WTC11 (cell line): ENCODE measurements at regions of chr6 and their contacts with region 1.

Region 1: DNA sequence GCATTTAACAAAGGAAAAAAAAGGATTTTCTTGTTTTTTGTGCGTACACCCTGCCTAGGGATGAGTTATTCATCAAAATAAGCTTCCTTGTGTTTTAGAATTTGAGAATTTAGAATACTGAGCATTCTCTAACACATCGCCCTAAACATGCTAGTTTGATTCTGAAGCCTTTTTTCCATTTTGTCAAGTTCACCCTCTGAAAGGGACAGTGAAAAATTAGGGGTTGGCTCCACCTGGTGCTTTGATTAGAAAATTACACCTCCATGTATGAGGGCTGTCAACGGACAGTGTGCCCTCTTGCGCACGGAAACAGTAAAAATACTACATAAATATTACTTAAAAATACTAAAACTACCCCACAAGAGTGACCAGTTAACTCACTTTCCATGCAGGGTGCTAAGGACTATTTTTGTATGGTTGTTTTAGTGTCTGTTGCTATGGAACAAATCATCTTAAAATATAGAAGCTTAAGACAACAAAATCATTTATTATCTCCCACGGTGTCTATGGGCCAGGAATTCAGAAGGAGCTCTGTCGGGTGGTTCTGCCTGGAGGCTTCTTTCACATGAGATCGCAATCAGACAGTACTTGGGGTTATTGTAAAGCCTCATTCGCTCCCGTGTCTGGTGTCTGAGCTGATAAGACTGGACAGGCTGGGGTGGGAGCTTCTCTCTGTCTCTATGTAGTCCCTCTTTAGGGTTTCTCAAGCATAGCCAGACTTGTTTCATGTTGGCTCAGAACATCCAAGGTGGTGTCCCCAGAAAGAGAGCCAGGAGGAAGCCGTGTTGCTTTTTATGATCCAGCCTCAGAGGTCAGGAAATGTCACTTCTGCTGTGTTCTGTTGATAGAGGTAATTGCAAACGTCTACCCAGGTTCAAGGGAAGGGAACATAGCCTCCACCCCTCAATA is 41.1 kb upstream of the TMEM170B start:
- DNase-seq: peak; percentile 58
- ATAC-seq: peak; percentile 90
- H3K4me3 Mint-ChIP-seq: no peak overlapping the region
- H3K27ac Mint-ChIP-seq: no peak overlapping the region; the same call in 1 of the 2 replicates
- H3K4me1 Mint-ChIP-seq: peaks cover 12% of the 10 kb centered on the region
- H3K27me3 Mint-ChIP-seq: no peaks in the 10 kb centered on the region
- CTCF ChIP-seq: peak; percentile 77

Region 2: DNA sequence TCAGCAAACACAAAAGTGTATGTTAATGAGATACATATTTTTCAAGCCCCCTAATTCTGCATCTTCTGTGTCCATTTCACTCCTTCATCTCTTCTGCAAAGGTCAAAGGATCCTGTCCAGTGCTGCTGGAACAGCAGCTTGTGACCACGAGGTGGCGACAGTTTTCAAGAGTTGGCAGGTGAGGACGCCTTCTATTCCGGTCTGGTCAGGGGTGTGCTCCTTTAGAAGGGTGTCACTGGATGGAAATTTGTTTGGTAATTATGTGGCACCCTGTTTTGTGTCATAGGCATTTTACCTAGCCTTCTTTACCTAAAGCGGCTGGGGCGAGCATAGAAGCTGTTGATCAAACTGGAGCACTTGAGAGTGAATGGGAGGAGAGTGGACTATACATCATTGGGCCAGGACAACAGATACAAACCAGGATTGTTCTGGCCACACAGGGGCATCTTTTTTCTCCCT is 352.0 kb before region 1 on chr6:
- CTCF ChIA-PET with region 1: interaction called, 22 read pairs
- POLR2A ChIA-PET with region 1: no interaction called
- DNase-seq: peak; percentile 77
- ATAC-seq: peak; percentile 81
- H3K4me3 Mint-ChIP-seq: no peak overlapping the region
- H3K27ac Mint-ChIP-seq: no peak overlapping the region
- H3K4me1 Mint-ChIP-seq: peaks cover 28% of the 10 kb centered on the region
- H3K27me3 Mint-ChIP-seq: no peaks in the 10 kb centered on the region
- CTCF ChIP-seq: peak; percentile 67

Region 3: GRCh38 chr6:11172501-11173332 is 323.7 kb before region 1 on chr6:
- CTCF ChIA-PET with region 1: interaction called, 19 read pairs
- POLR2A ChIA-PET with region 1: no interaction called
- DNase-seq: peak; percentile 84
- ATAC-seq: peak; percentile 85
- H3K4me3 Mint-ChIP-seq: peak overlapping the region; percentile 17; the same call in 1 of the 2 replicates
- H3K27ac Mint-ChIP-seq: no peak overlapping the region
- H3K4me1 Mint-ChIP-seq: peaks cover 17% of the 10 kb centered on the region
- H3K27me3 Mint-ChIP-seq: no peaks in the 10 kb centered on the region; the same call in 1 of the 2 replicates
- CTCF ChIP-seq: peak; percentile 91

Region 4: DNA sequence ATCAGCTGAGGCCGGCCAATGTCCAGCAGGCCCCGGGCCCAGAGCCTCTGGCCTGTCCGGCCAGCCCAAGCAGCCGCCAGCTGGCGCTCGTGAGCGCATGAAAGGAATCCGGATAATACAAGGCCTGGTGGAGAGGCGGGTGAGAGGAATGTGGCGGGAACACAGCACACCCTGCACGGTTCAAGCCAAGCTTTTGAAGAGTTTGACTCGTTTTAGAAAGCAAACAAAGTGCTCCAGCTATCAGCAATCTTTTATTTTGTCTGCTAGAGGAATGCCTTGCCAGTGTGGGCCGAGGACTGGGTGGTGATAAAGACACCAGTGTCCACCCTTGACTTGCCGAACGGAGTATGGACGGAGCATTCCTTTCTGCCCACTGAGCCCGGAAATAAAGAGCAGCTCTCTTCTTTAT is 254.6 kb before region 1 on chr6:
- CTCF ChIA-PET with region 1: interaction called, 24 read pairs
- POLR2A ChIA-PET with region 1: no interaction called
- DNase-seq: peak; percentile 89
- ATAC-seq: peak; percentile 100
- H3K4me3 Mint-ChIP-seq: no peak overlapping the region
- H3K27ac Mint-ChIP-seq: no peak overlapping the region
- H3K4me1 Mint-ChIP-seq: peaks cover 3% of the 10 kb centered on the region
- H3K27me3 Mint-ChIP-seq: peaks cover 17% of the 10 kb centered on the region
- CTCF ChIP-seq: peak; percentile 55

Region 5: DNA sequence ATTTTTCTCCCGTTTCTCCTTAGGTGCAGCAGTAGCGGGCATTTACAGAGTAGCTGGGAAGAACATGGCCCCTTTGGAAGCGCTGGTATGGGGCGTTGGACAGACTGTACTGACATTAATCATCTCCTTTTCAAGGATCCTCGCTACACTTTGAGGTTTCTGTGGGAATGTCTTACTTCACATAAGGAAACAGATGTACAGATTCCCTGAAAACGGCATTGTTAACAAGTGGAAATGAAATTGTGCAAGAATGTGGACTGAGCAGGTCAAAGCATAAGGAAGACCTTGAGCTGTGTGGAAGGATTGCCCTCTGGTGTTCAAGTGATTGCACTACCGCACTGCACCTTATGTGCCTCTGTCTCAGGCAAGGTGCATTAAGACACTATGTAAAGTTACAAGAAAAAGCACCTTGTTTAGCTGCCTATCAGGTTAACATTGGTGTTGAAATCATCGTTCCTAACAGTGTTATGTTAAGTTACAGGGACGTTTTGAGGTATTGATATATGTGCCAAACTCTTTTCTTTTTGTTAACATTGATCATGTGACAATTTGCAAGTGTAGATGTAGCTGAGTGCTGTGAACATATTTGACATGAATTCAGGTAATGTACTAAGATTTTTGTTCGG is 79.1 kb after region 1 on chr6:
- CTCF ChIA-PET with region 1: interaction called, 18 read pairs
- POLR2A ChIA-PET with region 1: no interaction called
- DNase-seq: peak; percentile 63
- ATAC-seq: peak; percentile 100
- H3K4me3 Mint-ChIP-seq: no peak overlapping the region
- H3K27ac Mint-ChIP-seq: no peak overlapping the region
- H3K4me1 Mint-ChIP-seq: no peaks in the 10 kb centered on the region
- H3K27me3 Mint-ChIP-seq: no peaks in the 10 kb centered on the region
- CTCF ChIP-seq: peak; percentile 50